GM10248 (cell line): ENCODE measurements at regions of chr22 and their contacts with region 1.

Region 1: GRCh38 chr22:41666661-41667258 is 21.9 kb downstream of the SNU13 start:
- DNase-seq: peak; percentile 99
- CTCF ChIP-seq: peak; percentile 99

Region 2: DNA sequence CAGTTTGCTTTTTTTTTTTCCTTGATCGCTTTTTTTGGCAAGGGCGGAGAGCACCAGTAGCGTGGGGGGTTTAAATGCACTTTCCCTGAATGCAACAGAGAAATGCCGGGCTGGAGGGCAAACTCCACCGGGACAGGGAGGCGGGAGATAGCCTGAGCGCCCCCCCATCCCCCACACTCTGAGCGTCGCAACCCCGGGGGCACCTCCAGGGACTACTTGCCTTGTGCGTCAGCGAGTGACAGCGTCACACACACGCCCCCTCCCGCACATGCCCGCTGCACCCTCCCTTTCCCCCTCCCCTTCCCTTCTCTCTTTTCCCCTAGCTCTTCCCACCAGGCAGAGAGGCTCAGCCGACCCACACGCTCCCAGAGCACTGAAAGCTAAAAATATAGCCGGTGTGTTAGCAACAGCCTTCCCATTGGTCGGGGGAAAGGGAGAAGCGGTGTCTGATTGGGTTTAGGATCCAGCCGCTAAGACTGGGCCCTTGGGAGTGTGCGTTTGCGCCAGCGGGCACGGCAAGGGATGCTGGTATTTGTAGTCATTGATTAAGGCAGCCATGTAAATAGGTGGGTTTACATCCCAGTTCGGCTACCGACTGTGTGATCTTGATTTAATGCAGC is 218.5 kb before region 1 on chr22:
- CTCF ChIA-PET with region 1: no interaction called
- POLR2A ChIA-PET with region 1: no interaction called
- DNase-seq: peak; percentile 90
- CTCF ChIP-seq: no peak

Region 3: DNA sequence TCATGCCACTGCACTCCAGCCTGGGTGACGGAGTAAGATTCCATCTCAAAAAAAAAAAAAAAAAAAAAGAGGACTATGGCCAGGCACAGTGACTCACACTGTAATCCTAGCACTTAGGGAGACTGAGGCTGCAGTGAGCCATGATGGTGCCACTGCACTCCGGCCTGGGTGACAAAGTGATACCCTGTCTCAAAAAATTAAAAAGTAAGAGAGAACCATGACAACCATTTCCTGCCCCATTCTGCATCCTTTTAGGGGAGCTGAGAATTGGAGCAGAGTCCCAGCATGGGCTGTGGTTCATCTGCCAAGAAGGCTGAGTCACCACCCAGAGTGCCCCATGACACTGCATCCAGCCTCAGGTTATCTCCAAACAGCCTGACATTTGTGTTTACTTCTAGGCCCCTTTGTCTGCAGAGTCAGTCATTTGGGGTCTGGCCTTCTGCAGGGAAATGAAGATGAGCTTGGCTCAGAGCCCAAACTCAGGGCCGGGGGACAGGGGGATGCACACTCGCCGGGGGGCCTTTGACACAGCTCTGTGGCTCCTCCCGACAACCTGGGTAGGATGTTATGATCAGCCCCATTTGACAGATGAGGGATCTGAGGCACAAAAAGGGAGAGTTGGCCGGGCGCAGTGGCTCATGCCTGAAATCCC is 101.2 kb before region 1 on chr22:
- CTCF ChIA-PET with region 1: no interaction called
- POLR2A ChIA-PET with region 1: no interaction called
- DNase-seq: no peak
- CTCF ChIP-seq: no peak

Region 4: GRCh38 chr22:41656556-41656955 is 10.2 kb before region 1 on chr22:
- CTCF ChIA-PET with region 1: interaction called, 82 read pairs
- POLR2A ChIA-PET with region 1: no interaction called
- DNase-seq: no peak
- CTCF ChIP-seq: no peak

Region 5: DNA sequence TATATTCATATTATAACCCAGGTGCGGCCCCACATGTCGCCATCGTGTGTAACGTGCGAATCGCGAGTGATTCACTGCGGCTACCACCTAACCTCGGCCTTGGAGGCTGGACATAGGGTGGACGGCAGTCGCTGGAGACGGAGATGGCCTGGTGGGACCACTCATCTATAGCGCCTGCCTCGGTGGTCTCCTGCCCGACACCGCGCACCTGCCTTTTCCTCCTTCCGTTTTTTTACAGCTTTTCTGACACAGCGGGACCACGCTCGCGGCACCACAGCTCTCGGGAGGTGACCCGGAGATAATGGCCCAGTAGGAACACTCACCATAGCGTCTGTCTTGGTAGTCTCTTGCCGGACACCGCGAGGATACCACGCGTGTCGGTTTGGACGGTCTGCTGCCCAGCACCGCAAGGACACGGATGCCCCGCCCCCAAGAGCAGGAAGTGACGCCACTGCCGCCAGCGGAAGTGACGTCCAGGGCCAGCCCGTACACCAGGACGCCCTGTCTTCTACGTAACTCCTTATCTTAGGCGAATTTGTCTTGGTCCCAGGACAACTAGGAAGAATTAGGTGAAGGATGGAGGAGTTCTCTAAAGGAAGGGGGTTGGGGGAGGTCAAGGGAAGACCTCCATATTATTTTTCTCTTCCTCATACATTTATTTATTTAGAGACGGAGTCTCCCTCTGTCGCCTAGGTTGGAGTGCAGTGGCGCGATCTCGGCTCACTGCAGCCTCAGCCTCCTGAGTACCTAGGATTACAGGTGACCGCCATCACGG is 15.5 kb after region 1 on chr22:
- CTCF ChIA-PET with region 1: interaction called, 17 read pairs
- POLR2A ChIA-PET with region 1: interaction called, 4 read pairs
- DNase-seq: peak; percentile 86
- CTCF ChIP-seq: no peak

Region 6: GRCh38 chr22:41688365-41689211 is 21.8 kb after region 1 on chr22 and contains the start of gene SNU13:
- CTCF ChIA-PET with region 1: interaction called, 13 read pairs
- POLR2A ChIA-PET with region 1: no interaction called
- DNase-seq: peak; percentile 95
- CTCF ChIP-seq: no peak

Region 7: DNA sequence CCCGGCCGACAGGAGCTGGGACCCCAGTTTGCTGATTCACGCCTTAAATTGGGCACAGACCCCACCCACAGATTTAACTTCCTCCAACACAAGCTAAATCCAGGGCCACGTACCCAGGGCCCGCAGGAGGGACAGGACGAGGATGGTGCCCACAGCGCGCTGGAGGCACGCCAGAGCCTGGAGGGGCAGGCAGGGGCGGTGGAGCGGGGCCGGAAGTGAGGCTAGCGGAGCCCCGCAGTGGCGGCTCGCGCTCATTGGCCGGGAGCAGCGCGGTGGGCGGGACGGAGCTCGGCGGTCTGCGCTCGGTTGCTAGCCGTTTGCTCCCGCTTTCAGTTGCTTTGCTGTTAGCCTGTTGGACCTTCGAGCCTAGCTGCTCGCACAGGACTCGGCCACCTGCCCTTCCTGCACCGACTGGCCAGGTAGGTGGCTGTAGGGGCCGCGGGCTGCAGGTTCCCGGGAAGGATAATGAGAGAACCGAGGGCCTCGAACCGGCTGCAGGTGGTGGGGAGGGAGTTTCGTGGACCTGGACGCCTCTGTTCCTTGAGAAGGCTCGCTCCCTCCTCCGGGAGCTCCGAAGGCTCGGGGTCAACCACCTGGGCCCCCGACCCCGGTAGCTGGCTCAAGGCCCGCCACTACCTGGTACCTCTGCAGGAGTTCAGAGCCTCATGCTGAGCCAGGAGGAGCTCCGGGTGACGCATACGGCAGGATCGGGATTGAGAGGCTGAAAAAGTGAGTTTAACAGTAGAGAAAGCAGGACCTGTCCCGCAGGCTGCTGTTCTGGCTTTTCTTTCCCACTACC is 133.8 kb after region 1 on chr22 and contains the start of gene CCDC134:
- CTCF ChIA-PET with region 1: no interaction called
- POLR2A ChIA-PET with region 1: interaction called, 16 read pairs
- DNase-seq: peak; percentile 97
- CTCF ChIP-seq: no peak